Activated T-helper 1 cell treated with anti-CD3 and anti-CD28 coated beads, Interleukin-12 subunit alpha, Interleukin-12 subunit beta, Interleukin-2, Interleukin-4 antibody, amounts not matched to agents 30 ng/mL and 10 ng/mL and 1 ng/mL, durations not matched to agents 14 hours and 24 hours and 36 hours (primary cell): ENCODE measurements at regions of chr12 and their contacts with region 1.

Region 1: GRCh38 chr12:122500685-122501488 is at the start of gene ZCCHC8:
- DNase-seq: peak; percentile 96
- H3K4me3 Mint-ChIP-seq: peak within 1 kb of the TSS; percentile 92
- H3K27ac Mint-ChIP-seq: peak within 1 kb of the TSS; percentile 92
- H3K4me1 Mint-ChIP-seq: peaks cover 31% of the 10 kb centered on the region
- H3K27me3 Mint-ChIP-seq: no peaks in the 10 kb centered on the region
- total RNA-seq, gene ZCCHC8: 42.5 and 48.4 TPM in 2 replicates

Region 2: DNA sequence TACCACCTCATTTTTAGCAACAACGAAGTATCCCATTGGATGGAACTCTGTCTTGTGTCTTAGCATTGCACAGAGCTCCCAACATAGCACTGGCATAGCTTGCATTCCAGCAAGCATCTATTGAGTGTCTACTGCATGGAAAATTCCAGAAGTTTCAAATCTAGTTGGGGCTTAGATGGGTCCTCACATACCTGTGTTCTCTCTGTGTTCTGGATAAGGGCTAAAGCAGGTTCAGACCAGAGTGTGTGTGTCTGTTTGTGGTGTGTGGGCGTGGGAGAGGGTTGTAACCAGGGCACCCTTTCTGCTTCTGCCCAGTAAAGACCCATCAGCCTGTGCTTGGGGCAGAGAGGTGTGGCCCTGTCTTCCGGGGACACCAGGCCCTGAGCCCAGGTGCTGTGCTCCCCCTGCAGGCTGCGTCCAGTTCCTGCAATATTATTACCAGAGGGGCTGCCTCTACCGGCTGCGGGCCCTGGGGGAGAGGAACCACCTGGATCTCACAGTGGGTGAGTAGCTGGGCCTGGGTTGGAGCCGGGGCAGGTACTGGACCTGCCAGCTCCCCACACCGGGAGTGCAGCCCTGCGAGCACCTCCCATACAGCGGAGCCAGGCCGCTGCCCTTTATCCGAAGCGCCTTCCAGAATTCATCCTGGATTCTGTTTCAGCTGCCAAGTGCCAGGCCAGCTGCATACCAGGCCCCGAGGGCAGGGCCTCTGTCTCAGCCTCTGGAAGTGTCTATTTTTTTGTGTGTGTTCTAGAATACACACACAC is 727.7 kb before region 1 on chr12:
- intact Hi-C with region 1: no loop called
- DNase-seq: peak; percentile 71
- H3K4me3 Mint-ChIP-seq: no peak overlapping the region
- H3K27ac Mint-ChIP-seq: no peak overlapping the region
- H3K4me1 Mint-ChIP-seq: peaks cover 7% of the 10 kb centered on the region
- H3K27me3 Mint-ChIP-seq: no peaks in the 10 kb centered on the region

Region 3: GRCh38 chr12:121802846-121803630 is 697.8 kb before region 1 on chr12:
- intact Hi-C with region 1: loop called (anchors 2 kb)
- DNase-seq: peak; percentile 83
- H3K4me3 Mint-ChIP-seq: peak overlapping the region; percentile 87
- H3K27ac Mint-ChIP-seq: peak overlapping the region; percentile 97
- H3K4me1 Mint-ChIP-seq: peaks cover 40% of the 10 kb centered on the region
- H3K27me3 Mint-ChIP-seq: peaks cover 2% of the 10 kb centered on the region

Region 4: GRCh38 chr12:122265931-122266771 is 234.7 kb before region 1 on chr12 and contains the start of gene VPS33A:
- intact Hi-C with region 1: loop called (anchors 2 kb)
- DNase-seq: peak; percentile 95
- H3K4me3 Mint-ChIP-seq: peak within 1 kb of the TSS; percentile 94
- H3K27ac Mint-ChIP-seq: peak within 1 kb of the TSS; percentile 99
- H3K4me1 Mint-ChIP-seq: peaks cover 22% of the 10 kb centered on the region
- H3K27me3 Mint-ChIP-seq: no peaks in the 10 kb centered on the region
- total RNA-seq, gene VPS33A: 25.6 and 28.7 TPM in 2 replicates

Region 5: DNA sequence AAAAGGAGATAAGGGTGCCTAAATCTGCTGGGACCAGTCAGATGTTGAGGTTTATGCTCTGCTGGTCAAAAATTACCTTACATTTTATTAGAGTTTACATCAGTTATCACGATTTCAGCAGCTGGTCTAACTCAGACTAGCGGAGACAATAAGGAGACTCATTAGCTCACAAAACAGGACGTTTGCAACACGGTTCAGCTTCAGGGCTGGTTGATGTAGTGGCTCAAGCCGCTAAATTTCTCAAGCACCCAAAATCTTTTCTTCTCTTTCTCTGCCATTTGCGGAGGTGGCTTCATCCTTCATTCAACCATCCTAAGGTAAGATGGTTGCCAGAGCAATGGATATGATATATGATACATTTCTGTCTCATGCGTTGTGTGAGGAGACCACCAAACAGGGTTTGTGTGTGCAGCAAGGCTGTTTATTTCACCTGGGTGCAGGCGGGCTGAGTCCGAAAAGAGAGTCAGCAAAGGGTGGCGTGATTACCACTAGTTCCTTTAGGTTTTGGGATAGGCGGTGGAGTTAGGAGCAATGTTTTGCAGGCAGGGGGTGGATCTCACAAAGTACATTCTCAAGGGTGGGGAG is 48.1 kb before region 1 on chr12:
- intact Hi-C with region 1: loop called (anchors 2 kb)
- DNase-seq: no peak
- H3K4me3 Mint-ChIP-seq: peak overlapping the region; percentile 78
- H3K27ac Mint-ChIP-seq: peak overlapping the region; percentile 98
- H3K4me1 Mint-ChIP-seq: peaks cover 38% of the 10 kb centered on the region
- H3K27me3 Mint-ChIP-seq: no peaks in the 10 kb centered on the region

Region 6: DNA sequence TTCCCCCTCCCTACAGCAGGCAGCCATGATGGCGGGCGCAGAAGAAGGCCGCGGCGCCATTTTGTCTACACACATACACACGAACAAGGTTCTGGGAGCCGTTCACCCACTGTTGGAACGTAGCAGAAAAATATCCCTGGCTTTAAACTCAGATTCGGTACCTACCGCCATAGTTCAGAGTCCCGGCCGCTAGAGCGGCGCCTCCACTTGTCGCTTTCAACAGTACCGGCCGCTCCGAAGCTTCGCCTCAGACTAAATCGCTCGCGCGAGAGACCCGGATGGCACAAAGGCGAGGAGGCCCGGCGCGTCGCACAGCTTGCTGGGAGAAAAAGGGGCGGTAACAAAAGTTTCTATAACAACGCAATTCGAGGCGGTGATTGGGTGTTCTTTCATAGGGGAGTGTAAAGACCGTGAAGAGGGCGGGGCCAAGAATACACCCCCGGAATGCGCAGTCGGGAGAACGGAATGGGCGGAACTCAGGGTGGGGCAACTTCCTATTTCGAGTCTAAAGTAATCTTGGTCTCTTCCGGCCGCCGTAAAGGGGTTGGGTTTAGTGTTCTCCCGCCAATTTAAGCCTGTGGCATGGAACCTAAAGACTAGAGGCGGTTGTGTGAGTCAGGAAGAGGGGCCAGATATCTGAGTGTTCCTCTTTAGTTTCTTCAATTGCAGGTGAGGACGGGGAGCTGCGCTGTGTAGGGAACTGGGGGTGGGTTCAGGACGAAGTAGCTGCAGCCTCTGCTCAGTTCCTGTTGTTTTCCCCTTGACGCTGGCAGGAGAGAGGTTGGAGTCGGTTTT is 26.0 kb after region 1 on chr12 and contains the starts of genes KNTC1 and RSRC2:
- intact Hi-C with region 1: loop called (anchors 1 kb)
- DNase-seq: peak; percentile 99
- H3K4me3 Mint-ChIP-seq: no peak within 1 kb of the TSS
- H3K27ac Mint-ChIP-seq: no peak within 1 kb of the TSS
- H3K4me1 Mint-ChIP-seq: peaks cover 43% of the 10 kb centered on the region
- H3K27me3 Mint-ChIP-seq: no peaks in the 10 kb centered on the region
- total RNA-seq, gene KNTC1: 122 and 126 TPM in 2 replicates
- total RNA-seq, gene RSRC2: 101 and 103 TPM in 2 replicates

Region 7: DNA sequence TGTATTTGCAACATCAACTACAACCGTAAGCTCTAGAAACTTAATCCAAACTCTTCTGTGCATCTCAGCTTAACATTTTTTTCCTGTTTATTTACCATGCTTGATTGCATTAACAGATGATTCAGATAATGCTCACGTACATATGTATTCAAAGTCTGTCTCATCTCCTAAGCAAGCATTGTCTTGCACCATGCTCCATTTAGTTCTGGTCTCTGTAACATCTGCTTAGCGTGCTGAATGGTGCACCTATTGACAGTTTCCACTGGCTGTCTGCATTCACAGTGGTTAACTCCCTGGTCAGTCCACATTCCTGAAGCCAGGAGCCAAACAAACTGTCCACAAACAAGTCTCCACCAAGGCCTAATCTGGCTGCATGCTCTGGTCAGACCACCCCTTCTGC is 110.0 kb after region 1 on chr12:
- intact Hi-C with region 1: no loop called
- DNase-seq: no peak
- H3K4me3 Mint-ChIP-seq: no peak overlapping the region
- H3K27ac Mint-ChIP-seq: no peak overlapping the region
- H3K4me1 Mint-ChIP-seq: no peaks in the 10 kb centered on the region
- H3K27me3 Mint-ChIP-seq: no peaks in the 10 kb centered on the region